CD4-positive, alpha-beta T cell (primary cell): ENCODE measurements at regions of chr10 and their contacts with region 1.

Region 1: GRCh38 chr10:130341356-130341755 is 205.2 kb downstream of the GLRX3 start:
- DNase-seq: no peak
- ATAC-seq: no peak
- H3K4me3 ChIP-seq: no peak overlapping the region
- H3K4me3 Mint-ChIP-seq: no peak overlapping the region
- H3K27ac ChIP-seq: no peak overlapping the region
- H3K27ac Mint-ChIP-seq: no peak overlapping the region
- H3K4me1 ChIP-seq: no peaks in the 10 kb centered on the region
- H3K4me1 Mint-ChIP-seq: no peaks in the 10 kb centered on the region
- H3K27me3 ChIP-seq: peaks cover 0 to 4% of the 10 kb centered on the region in 2 experiments
- H3K27me3 Mint-ChIP-seq: peaks cover 49% of the 10 kb centered on the region
- CTCF ChIP-seq: no peak

Region 2: DNA sequence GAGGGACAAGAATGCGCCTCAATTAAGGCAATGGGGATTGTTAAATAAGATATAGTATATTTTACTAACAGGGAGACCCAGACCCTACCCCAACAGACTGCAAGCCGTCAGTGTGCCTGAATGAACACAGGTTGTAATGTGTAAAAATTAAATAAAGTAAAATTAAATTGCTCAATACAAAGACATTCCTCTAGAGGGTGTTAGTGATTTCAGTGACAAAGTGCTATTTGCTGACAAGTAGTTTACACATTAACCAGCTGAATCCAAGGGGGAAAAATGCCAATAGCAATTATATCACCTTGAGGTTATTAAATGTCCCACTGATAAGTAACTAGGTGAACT is 487.8 kb before region 1 on chr10:
- CTCF ChIA-PET with region 1: no interaction called
- POLR2A ChIA-PET with region 1: no interaction called
- intact Hi-C with region 1: no loop called
- DNase-seq: no peak
- ATAC-seq: no peak
- H3K4me3 ChIP-seq: no peak overlapping the region
- H3K4me3 Mint-ChIP-seq: no peak overlapping the region
- H3K27ac ChIP-seq: no peak overlapping the region
- H3K27ac Mint-ChIP-seq: no peak overlapping the region
- H3K4me1 ChIP-seq: no peaks in the 10 kb centered on the region
- H3K4me1 Mint-ChIP-seq: no peaks in the 10 kb centered on the region
- H3K27me3 ChIP-seq: peaks cover 0 to 2% of the 10 kb centered on the region in 2 experiments
- H3K27me3 Mint-ChIP-seq: peaks cover 13% of the 10 kb centered on the region
- CTCF ChIP-seq: no peak

Region 3: DNA sequence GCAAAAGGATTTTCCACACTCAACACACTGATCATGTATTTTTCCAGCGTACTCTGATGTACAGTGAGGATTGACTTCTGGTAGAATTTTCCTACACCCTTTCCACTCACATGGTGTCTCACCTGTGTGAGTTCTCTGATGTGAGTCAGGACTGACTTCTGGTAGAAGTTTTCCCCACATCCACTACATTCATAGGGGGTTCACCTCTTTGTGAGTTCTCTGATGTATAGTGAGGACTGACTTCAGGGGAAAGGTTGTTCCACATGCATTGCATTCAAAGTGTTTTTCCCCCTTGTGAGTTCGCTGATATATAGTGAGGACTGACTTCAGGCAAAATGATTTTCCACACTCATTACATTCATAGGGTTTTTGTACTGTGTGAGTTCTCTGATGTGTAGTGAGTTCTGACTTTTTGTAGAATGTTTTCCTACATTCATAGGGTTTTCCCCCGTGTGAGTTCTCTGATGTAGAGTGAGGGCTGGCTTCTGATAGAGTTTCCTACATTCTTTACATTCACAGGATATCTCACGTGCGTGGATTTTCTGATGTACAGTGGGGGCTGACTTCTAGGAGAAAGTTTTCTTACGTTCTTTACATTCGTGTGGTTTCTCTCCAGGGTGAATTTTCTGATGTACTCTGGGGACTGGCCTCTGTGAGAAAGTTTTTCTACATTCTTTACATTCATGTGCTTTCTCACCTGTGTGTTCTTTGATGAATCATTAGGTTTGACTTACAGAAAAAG is 58.7 kb before region 1 on chr10:
- CTCF ChIA-PET with region 1: no interaction called
- POLR2A ChIA-PET with region 1: no interaction called
- intact Hi-C with region 1: loop called in 1 of 2 experiments (anchors 2 kb)
- DNase-seq: no peak
- ATAC-seq: no peak
- H3K4me3 ChIP-seq: no peak overlapping the region
- H3K4me3 Mint-ChIP-seq: no peak overlapping the region
- H3K27ac ChIP-seq: no peak overlapping the region
- H3K27ac Mint-ChIP-seq: no peak overlapping the region
- H3K4me1 ChIP-seq: no peaks in the 10 kb centered on the region
- H3K4me1 Mint-ChIP-seq: no peaks in the 10 kb centered on the region
- H3K27me3 ChIP-seq: no peaks in the 10 kb centered on the region
- H3K27me3 Mint-ChIP-seq: peaks cover 6% of the 10 kb centered on the region
- CTCF ChIP-seq: no peak

Region 4: GRCh38 chr10:130326954-130327353 is 14.4 kb before region 1 on chr10:
- CTCF ChIA-PET with region 1: no interaction called
- POLR2A ChIA-PET with region 1: no interaction called
- intact Hi-C with region 1: no loop called
- DNase-seq: no peak
- ATAC-seq: no peak
- H3K4me3 ChIP-seq: no peak overlapping the region
- H3K4me3 Mint-ChIP-seq: no peak overlapping the region
- H3K27ac ChIP-seq: no peak overlapping the region
- H3K27ac Mint-ChIP-seq: no peak overlapping the region
- H3K4me1 ChIP-seq: no peaks in the 10 kb centered on the region
- H3K4me1 Mint-ChIP-seq: no peaks in the 10 kb centered on the region
- H3K27me3 ChIP-seq: peaks cover 0 to 2% of the 10 kb centered on the region in 2 experiments
- H3K27me3 Mint-ChIP-seq: peaks cover 30% of the 10 kb centered on the region
- CTCF ChIP-seq: no peak

Region 5: GRCh38 chr10:130352291-130352645 is 10.9 kb after region 1 on chr10:
- CTCF ChIA-PET with region 1: no interaction called
- POLR2A ChIA-PET with region 1: no interaction called
- intact Hi-C with region 1: no loop called
- DNase-seq: no peak
- ATAC-seq: no peak
- H3K4me3 ChIP-seq: no peak overlapping the region
- H3K4me3 Mint-ChIP-seq: no peak overlapping the region
- H3K27ac ChIP-seq: no peak overlapping the region
- H3K27ac Mint-ChIP-seq: no peak overlapping the region
- H3K4me1 ChIP-seq: no peaks in the 10 kb centered on the region
- H3K4me1 Mint-ChIP-seq: no peaks in the 10 kb centered on the region
- H3K27me3 ChIP-seq: no peaks in the 10 kb centered on the region
- H3K27me3 Mint-ChIP-seq: peaks cover 8% of the 10 kb centered on the region
- CTCF ChIP-seq: no peak